ENCODE measurements at regions of chr3 and their contacts with region 1.

Region 1: DNA sequence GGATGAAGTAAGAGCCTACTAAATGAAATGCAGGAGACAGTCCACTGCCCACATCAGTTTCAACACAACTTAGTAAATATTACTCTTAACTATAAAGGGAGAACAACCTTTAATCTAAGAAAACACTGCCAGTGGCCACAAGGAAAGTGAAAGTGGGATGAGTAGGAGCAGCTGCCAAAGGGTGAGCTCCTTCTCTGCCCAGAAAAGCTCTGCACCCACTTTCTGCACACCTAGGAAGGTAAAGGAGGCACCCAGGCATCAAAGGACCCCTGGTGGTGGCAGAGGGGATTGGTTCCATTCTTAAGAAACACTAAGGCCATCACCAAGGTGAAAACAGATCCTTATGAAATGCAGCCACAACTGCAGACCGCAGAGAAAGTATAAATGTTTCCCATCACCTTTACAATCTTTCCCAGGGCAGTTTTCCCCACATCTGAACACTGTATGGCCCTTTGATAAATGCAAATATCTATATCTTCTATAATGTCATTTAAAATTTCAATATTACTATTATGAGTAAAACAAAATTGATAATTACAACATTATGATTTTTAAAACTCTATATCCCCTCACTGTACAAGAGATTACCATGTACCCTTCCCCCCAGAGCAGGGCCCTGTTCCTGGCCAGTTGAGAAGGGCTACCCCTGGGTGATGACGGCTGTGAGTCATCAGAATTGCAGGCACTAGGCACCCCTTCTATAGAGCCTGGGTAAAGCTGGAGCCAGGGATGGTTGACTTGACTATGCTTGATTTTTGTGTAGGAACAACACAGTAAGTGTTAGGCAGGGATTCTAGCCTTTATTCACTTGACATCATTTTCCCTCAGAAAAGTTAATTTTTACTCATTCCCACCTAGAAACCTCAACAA is 92.0 kb downstream of the SNRK start:
- DNase-seq: peak; percentile 84
- H3K4me3 Mint-ChIP-seq: no peak overlapping the region
- H3K27ac Mint-ChIP-seq: no peak overlapping the region
- H3K4me1 Mint-ChIP-seq: peaks cover 12% of the 10 kb centered on the region
- H3K27me3 Mint-ChIP-seq: no peaks in the 10 kb centered on the region

Region 2: DNA sequence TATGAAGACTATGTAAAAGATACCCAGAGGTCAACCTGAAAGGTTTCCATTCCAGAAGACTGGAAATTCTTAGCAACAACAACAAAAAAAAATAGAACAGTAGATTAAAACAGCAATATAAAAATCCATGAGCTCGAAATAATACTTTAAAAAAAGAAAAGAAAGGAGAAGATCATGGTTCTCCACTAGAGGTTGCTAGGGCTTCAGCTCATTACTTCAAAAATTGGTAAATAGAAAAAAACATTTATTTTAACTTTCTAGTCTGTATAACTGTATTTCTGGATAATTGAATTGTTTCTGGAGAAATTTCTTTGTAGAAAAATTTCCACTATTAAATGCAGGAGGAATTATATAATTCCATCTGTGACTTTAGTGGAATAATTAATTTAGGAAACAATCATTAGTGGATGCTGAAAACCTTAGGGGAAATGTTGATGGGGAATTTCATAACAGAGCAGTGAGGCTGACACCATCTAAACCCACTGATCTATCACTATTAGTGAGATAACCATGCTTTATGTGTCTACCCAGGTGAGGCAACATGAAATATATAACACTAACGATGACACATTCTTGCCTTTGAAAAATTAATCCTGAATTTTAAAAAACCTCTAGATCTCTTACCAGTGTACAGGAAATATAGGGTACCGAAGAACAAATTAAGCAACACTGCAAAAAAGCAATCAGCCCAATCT is 154.5 kb before region 1 on chr3:
- CTCF ChIA-PET with region 1: interaction called, 4 read pairs
- intact Hi-C with region 1: loop called (anchors 1 kb)
- DNase-seq: no peak
- H3K4me3 Mint-ChIP-seq: no peak overlapping the region
- H3K27ac Mint-ChIP-seq: no peak overlapping the region
- H3K4me1 Mint-ChIP-seq: peaks cover 49% of the 10 kb centered on the region
- H3K27me3 Mint-ChIP-seq: no peaks in the 10 kb centered on the region

Region 3: GRCh38 chr3:43326891-43327581 is 51.3 kb before region 1 on chr3:
- CTCF ChIA-PET with region 1: no interaction called
- intact Hi-C with region 1: no loop called
- DNase-seq: no peak
- H3K4me3 Mint-ChIP-seq: no peak overlapping the region
- H3K27ac Mint-ChIP-seq: peak overlapping the region; percentile 38
- H3K4me1 Mint-ChIP-seq: peaks cover 69% of the 10 kb centered on the region
- H3K27me3 Mint-ChIP-seq: no peaks in the 10 kb centered on the region

Measured in activated naive CD4-positive, alpha-beta T cell treated with anti-CD3 and anti-CD28 coated beads for 36 hours (primary cell).